Dorsolateral prefrontal cortex (tissue), 120 donors: ENCODE measurements at regions of chr12 and their contacts with region 1.

Region 1: GRCh38 chr12:64551698-64552097 is 58.6 kb upstream of the RASSF3 start:
- DNase-seq: no peak
- H3K4me3 ChIP-seq: no peak overlapping the region
- H3K27ac ChIP-seq: no peak overlapping the region
- H3K27me3 ChIP-seq: peaks cover 0 to 2% (median 0%) of the 10 kb centered on the region in 45 donors
- CTCF ChIP-seq: no peak

Region 2: DNA sequence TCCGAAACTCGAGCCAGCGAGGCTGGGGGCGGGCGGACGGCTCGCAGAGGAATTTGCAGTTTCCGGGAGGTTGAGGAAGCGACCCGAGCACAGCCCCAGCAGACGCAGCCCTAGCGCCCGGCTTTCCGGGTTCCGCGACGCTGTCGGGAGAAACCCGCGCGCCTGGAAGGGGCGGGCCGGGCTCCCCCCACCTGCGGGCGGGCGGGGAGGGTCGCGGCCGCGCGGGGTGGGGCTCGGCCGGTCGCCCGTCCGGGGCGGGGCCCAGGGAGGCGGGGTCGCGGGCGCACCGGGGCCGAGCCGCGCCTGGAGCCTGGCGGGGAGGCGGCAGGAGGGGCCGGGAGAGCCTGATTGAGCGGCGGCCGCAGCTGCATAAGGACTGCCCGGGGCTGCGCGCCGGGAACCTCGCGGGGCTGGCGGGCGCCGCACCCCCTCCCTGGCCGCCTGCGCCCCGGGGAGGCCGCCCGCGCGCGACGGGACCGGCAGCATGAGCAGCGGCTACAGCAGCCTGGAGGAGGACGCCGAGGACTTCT is 58.5 kb after region 1 on chr12 and contains the start of gene RASSF3:
- intact Hi-C with region 1: loop called (anchors 5 to 10 kb)
- DNase-seq: peak in 4 of 10 donors; percentile 5 to 59 (median 38)
- H3K4me3 ChIP-seq: peak within 1 kb of the TSS; percentile 49 to 91 (median 77)
- H3K27ac ChIP-seq: peak within 1 kb of the TSS in 56 of 59 donors; percentile 8 to 89 (median 80)
- H3K27me3 ChIP-seq: no peaks in the 10 kb centered on the region
- CTCF ChIP-seq: no peak
- total RNA-seq, gene RASSF3: 6.5 to 38.3 (median 12.8) TPM